GM23248 (cell line): ENCODE measurements at regions of chr16 and their contacts with region 1.

Region 1: GRCh38 chr16:80536238-80536637 is 4.6 kb upstream of the DYNLRB2 start:
- DNase-seq: no peak
- H3K4me3 ChIP-seq: no peak overlapping the region
- H3K27ac ChIP-seq: no peak overlapping the region
- H3K4me1 ChIP-seq: no peaks in the 10 kb centered on the region; the same call in 1 of the 2 replicates
- H3K27me3 ChIP-seq: no peaks in the 10 kb centered on the region; the same call in 1 of the 2 replicates

Region 2: DNA sequence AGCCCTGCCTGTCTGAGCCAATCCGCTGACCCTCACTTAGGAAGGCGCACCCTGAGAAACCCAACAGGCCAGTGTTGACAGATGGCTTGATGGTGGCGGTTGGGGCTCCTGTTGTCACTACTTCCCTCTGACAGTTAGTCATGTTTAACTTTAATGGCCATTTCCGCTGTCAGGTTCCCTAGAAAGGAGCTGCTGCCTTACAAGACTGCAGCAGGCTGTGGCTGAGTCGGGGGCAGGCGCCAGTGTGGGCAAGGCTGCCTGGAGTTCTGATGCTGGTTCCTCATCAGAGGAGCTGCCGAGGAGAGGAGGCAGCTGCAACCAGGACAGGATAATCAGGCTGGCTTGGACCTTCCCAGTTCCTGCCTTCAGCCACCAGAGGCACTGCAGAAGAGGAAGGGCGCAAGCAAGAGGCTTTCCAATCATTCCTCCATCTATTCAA is 218.6 kb before region 1 on chr16:
- in situ Hi-C with region 1: no loop called
- DNase-seq: no peak
- H3K4me3 ChIP-seq: no peak overlapping the region
- H3K27ac ChIP-seq: no peak overlapping the region
- H3K4me1 ChIP-seq: no peaks in the 10 kb centered on the region
- H3K27me3 ChIP-seq: no peaks in the 10 kb centered on the region

Region 3: GRCh38 chr16:80816365-80816764 is 280.1 kb after region 1 on chr16:
- in situ Hi-C with region 1: loop called (anchors 10 kb)
- DNase-seq: no peak
- H3K4me3 ChIP-seq: no peak overlapping the region
- H3K27ac ChIP-seq: no peak overlapping the region
- H3K4me1 ChIP-seq: no peaks in the 10 kb centered on the region
- H3K27me3 ChIP-seq: peaks cover 7% of the 10 kb centered on the region; the same call in 1 of the 2 replicates